Posterior cingulate gyrus (tissue), 11 donors: ENCODE measurements at regions of chr15 and their contacts with region 1.

Region 1: GRCh38 chr15:74373731-74374647 is 6.5 kb upstream of the CYP11A1 start:
- DNase-seq: peak; percentile 76 to 98 (median 90)

Region 2: DNA sequence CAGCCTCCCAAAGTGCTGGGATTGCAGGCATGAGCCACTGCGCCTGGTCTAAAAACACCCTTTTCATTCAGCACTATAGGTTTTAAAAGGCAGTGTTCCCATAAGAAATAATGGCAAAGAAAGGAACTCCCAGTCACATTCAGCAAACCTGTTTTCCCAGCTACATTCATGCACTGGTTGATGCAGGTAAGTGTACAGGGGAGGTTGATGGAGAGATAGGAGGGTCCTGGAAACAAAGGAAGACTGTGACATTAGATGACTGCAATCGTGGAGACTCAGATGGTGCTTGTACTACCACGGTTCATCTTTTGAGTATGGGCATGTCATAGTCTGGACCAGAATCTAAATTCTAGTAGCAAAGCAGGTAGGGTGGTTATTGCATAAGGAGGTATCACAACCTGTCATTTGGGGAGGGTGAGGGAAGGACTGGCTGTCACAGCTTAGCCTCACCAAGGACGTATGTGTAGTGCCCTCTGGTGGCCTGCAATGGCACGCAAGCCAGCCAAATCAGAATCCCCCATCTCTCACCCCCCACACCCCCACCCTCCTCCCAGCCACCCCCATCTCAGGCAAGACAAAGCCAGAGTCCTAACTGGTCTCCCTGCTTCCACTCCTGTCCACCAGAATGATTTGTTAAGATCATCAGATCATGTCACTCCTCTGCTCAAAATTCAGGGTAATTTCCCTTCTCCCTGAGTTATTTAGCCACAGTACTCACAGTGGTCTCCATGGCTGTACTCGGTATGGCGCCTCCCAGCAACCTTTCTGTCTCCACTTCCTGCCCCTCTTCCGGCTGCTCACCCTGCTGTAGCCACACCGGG is 115.7 kb after region 1 on chr15:
- intact Hi-C with region 1: loop called (anchors 2 kb)
- DNase-seq: peak in 9 of 10 donors; percentile 11 to 91 (median 53)

Region 3: DNA sequence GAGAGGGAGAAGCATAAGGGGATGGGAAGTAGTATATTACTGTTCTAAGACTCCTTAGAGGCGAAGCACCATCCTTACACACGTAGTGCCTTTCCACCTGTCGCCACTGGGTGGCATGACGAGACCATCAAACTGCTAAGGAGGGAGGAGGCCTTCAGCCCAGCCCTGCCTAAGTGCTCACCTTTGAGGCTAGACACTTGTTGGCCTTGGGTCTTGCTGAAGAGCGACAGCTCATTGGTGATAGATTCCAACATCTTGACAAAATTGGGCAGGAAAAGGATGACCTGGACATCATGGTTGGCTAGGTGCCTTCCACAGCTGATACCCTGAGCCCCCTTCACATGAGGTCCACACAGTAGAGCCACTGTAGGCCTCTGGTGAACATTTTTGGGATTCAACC is 261.2 kb after region 1 on chr15:
- intact Hi-C with region 1: loop called (anchors 1 kb)
- DNase-seq: peak in 9 of 10 donors; percentile 59 to 95 (median 73)